ENCODE measurements at regions of chr9 and their contacts with region 1.

Region 1: GRCh38 chr9:134407123-134407808 is 81.0 kb downstream of the RXRA start:
- DNase-seq: peak; percentile 94 to 97 (median 97)
- ATAC-seq: peak; percentile 80 to 81
- H3K4me3 ChIP-seq: no peak overlapping the region
- H3K27ac ChIP-seq: peak overlapping the region; percentile 61
- H3K4me1 ChIP-seq: peaks cover 56% of the 10 kb centered on the region
- H3K27me3 ChIP-seq: no peaks in the 10 kb centered on the region

Region 2: DNA sequence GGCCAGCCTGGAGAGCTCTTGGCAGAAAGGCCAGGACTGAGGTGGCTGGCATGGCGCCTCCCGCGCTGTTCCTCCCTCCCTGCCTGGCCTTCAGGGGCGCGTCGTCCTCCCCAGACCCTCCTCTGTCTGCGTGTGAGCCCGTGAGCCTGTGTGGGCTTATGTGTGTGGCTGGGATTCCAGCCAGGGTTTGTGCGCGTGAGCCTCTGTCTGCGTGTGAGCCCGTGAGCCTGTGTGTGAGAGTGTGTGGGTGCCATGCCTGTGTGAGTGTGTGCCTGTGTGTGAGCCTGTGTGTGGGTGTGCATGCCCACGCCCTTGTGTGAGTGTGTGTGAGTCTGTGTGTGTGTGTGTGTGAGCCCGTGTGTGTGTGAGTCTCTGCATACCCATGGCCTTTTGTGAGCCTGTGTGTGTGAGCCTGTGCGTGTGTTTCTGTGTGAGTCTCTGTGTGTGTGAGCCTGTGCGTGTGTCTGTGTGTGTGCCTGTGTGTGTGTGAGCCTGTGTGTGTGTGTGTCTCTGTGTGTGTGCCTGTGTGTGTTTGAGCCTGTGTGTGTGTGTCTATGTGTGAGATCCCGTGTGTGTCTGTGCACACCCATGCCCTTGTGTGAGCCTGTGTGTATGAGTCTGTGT is 68.0 kb before region 1 on chr9:
- intact Hi-C with region 1: loop called in 1 of 4 experiments (anchors 5 kb)
- DNase-seq: peak in 2 of 3 donors; percentile 80 to 83
- ATAC-seq: peak; percentile 1 to 2
- H3K4me3 ChIP-seq: no peak overlapping the region
- H3K27ac ChIP-seq: no peak overlapping the region
- H3K4me1 ChIP-seq: peaks cover 49% of the 10 kb centered on the region
- H3K27me3 ChIP-seq: no peaks in the 10 kb centered on the region

Region 3: GRCh38 chr9:134365791-134366688 is 41.2 kb before region 1 on chr9:
- intact Hi-C with region 1: loop called in 1 of 4 experiments (anchors 5 kb)
- DNase-seq: peak; percentile 91 to 96 (median 96)
- ATAC-seq: peak; percentile 83 to 84
- H3K4me3 ChIP-seq: no peak overlapping the region
- H3K27ac ChIP-seq: peak overlapping the region; percentile 84
- H3K4me1 ChIP-seq: peaks cover 24% of the 10 kb centered on the region
- H3K27me3 ChIP-seq: no peaks in the 10 kb centered on the region

Region 4: GRCh38 chr9:134536101-134536900 is 129.0 kb after region 1 on chr9:
- intact Hi-C with region 1: no loop called
- DNase-seq: no peak
- ATAC-seq: no peak
- H3K4me3 ChIP-seq: no peak overlapping the region
- H3K27ac ChIP-seq: no peak overlapping the region
- H3K4me1 ChIP-seq: no peaks in the 10 kb centered on the region
- H3K27me3 ChIP-seq: no peaks in the 10 kb centered on the region

Measured in right cardiac atrium (tissue), 5 donors.